ENCODE measurements at regions of chr14 and their contacts with region 1.

Region 1: GRCh38 chr14:102524466-102525218 is 15.1 kb upstream of the ANKRD9 start:
- DNase-seq: peak; percentile 100
- ATAC-seq: peak; percentile 98 to 99
- H3K4me3 ChIP-seq: peak overlapping the region; percentile 62
- H3K27ac ChIP-seq: peak overlapping the region; percentile 74
- H3K4me1 ChIP-seq: no peaks in the 10 kb centered on the region
- H3K27me3 ChIP-seq: no peaks in the 10 kb centered on the region

Region 2: GRCh38 chr14:102451061-102451350 is 73.6 kb before region 1 on chr14:
- intact Hi-C with region 1: no loop called
- DNase-seq: no peak
- ATAC-seq: peak in 1 of 2 donors; percentile 71
- H3K4me3 ChIP-seq: no peak overlapping the region
- H3K27ac ChIP-seq: no peak overlapping the region
- H3K4me1 ChIP-seq: no peaks in the 10 kb centered on the region
- H3K27me3 ChIP-seq: no peaks in the 10 kb centered on the region

Region 3: DNA sequence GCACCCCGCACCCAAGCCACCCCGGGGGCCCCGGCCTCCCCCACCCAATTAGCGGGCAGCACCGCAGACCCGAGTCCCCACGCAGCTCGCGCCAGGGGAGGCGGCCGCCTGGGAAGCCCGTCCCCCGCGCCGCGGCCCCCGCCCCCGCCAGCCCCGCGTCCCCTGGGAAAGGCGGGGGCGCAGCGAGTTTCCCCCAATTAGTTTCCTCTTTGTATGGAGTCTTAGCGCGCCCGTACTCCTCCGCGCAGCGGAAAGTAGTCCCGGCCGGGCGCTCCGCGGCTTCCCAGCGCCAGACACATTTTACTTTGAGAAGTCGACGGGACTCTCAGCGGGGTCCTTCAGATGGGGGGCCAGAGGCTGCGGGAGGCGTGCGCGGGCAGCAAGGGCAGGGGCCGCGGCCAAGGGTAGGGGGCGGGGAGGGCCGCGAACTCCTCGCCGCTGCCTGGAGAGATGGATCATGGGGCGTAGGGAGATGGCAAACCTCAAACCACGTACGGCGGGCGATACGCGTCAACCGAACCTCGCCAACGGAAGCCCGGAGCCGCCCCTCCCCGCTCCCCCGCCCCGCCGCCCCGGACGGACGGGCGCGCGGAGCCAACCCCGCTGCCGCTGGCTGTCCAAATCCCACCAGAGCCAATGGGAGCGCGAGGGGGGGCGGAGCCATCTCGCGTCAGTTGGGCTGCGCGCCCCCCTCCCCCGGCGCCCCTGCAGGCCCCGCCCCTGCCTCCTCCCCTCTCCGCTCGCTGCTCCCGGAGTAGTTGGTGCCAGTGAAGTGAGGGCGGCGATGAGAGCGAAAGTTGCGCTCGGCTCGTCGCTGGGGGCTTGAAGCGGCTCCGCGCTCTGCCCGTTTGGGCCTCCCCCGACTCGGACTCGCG is 67.5 kb after region 1 on chr14 and contains the start of gene RCOR1:
- intact Hi-C with region 1: loop called in 1 of 4 experiments (anchors 10 kb)
- DNase-seq: peak; percentile 98 to 99 (median 99)
- ATAC-seq: peak; percentile 95 to 96
- H3K4me3 ChIP-seq: peak within 1 kb of the TSS; percentile 96
- H3K27ac ChIP-seq: peak within 1 kb of the TSS; percentile 99
- H3K4me1 ChIP-seq: peaks cover 2% of the 10 kb centered on the region
- H3K27me3 ChIP-seq: no peaks in the 10 kb centered on the region
- total RNA-seq, gene RCOR1: 12.2 to 14.4 (median 13.6) TPM

Region 4: GRCh38 chr14:102819176-102819628 is 294.6 kb after region 1 on chr14:
- intact Hi-C with region 1: no loop called
- DNase-seq: no peak
- ATAC-seq: no peak
- H3K4me3 ChIP-seq: no peak overlapping the region
- H3K27ac ChIP-seq: no peak overlapping the region
- H3K4me1 ChIP-seq: peaks cover 3% of the 10 kb centered on the region
- H3K27me3 ChIP-seq: no peaks in the 10 kb centered on the region